Activated CD8-positive, alpha-beta T cell treated with anti-CD3 and anti-CD28 coated beads, Interleukin-2, amount 10 ng/mL, durations not matched to agents 7 days and 5 days (primary cell): ENCODE measurements at regions of chr5 and their contacts with region 1.

Region 1: GRCh38 chr5:76771705-76772405 is 47.0 kb upstream of the F2RL1 start:
- DNase-seq: no peak
- ATAC-seq: no peak
- H3K4me3 Mint-ChIP-seq: no peak overlapping the region
- H3K27ac Mint-ChIP-seq: no peak overlapping the region
- H3K4me1 Mint-ChIP-seq: peaks cover 4% of the 10 kb centered on the region
- H3K27me3 Mint-ChIP-seq: no peaks in the 10 kb centered on the region

Region 2: DNA sequence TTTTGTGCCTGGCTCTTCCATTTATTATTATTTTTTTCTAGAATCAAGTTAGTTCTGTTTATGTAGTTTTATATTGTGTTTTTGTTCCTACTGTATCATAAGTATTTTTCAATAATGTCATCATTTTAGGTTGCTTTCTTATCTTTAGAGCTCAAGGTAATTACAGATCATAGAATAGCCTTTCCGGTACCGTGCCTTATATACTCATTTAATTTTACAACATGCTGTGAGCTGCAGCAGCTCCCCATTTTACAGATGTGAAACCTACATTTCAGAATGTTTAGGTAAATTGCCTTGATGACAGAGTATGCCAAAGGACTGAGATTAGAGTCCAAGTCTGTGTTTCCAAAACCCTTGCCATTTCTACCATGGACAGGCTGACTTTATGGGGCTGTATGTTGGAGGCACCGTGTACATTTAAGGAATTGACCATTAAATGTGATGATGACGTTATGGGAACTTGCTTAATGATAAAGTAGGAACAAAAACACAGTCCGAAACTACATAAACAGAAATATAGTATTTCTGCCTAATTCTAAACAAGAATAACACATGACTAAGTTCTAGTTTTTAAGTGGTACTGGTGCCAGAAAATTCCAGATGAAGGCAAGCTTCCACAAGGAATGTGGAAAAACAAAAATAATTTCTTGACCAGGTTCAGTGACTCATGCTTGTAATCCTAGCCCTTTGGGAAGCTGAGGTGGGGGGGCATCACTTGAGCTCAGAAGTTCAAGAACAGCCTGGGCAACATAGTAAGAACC is 271.0 kb before region 1 on chr5:
- CTCF ChIA-PET with region 1: no interaction called
- POLR2A ChIA-PET with region 1: no interaction called
- DNase-seq: no peak
- ATAC-seq: no peak
- H3K4me3 Mint-ChIP-seq: no peak overlapping the region
- H3K27ac Mint-ChIP-seq: no peak overlapping the region
- H3K4me1 Mint-ChIP-seq: peaks cover 9% of the 10 kb centered on the region
- H3K27me3 Mint-ChIP-seq: no peaks in the 10 kb centered on the region

Region 3: GRCh38 chr5:76582230-76583162 is 189.4 kb before region 1 on chr5:
- CTCF ChIA-PET with region 1: interaction called, 19 read pairs
- POLR2A ChIA-PET with region 1: no interaction called
- DNase-seq: no peak
- ATAC-seq: no peak
- H3K4me3 Mint-ChIP-seq: no peak overlapping the region
- H3K27ac Mint-ChIP-seq: no peak overlapping the region
- H3K4me1 Mint-ChIP-seq: peaks cover 2% of the 10 kb centered on the region
- H3K27me3 Mint-ChIP-seq: no peaks in the 10 kb centered on the region

Region 4: DNA sequence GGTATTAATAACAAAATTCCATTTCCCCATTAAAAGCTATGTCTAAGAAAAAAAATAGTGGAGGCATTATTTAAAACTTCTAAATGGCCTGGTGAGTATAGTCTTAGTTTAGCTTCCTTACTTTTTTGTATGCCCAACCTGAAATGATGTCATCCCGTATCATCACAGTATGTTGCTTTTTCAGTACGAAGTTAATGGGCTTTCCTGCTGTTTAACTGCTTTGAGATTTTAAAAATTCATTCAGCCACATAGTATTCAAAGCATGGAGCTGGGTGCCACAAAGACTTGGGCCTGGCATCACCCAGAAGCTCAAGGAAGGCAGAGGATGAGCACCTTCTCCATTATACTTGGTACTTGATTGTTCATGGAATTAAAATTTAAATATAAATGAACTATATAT is 156.1 kb before region 1 on chr5:
- CTCF ChIA-PET with region 1: interaction called, 12 read pairs
- POLR2A ChIA-PET with region 1: interaction called, 3 read pairs
- DNase-seq: no peak
- ATAC-seq: no peak
- H3K4me3 Mint-ChIP-seq: no peak overlapping the region
- H3K27ac Mint-ChIP-seq: no peak overlapping the region
- H3K4me1 Mint-ChIP-seq: no peaks in the 10 kb centered on the region
- H3K27me3 Mint-ChIP-seq: no peaks in the 10 kb centered on the region

Region 5: DNA sequence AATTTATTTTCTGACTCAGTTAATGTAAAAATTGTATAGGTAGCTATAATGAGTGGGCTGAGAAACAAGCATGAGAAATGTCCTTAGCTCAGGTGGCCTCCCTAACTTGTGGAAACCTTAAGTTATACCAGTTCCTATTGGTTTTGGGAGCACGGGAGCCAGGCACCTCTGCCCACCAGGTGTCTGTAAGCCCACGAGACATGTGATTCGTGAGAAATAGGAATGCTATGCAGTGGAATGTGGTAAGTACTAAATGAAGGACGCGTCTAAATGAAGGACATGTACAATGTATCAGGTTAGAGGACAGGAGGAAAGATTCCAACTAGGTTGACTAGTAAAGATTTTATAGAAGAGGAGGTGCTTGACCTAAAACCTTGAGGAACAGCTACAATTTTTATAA is 102.6 kb before region 1 on chr5:
- CTCF ChIA-PET with region 1: interaction called, 11 read pairs
- POLR2A ChIA-PET with region 1: no interaction called
- DNase-seq: no peak
- ATAC-seq: no peak
- H3K4me3 Mint-ChIP-seq: no peak overlapping the region
- H3K27ac Mint-ChIP-seq: no peak overlapping the region
- H3K4me1 Mint-ChIP-seq: no peaks in the 10 kb centered on the region
- H3K27me3 Mint-ChIP-seq: no peaks in the 10 kb centered on the region

Region 6: DNA sequence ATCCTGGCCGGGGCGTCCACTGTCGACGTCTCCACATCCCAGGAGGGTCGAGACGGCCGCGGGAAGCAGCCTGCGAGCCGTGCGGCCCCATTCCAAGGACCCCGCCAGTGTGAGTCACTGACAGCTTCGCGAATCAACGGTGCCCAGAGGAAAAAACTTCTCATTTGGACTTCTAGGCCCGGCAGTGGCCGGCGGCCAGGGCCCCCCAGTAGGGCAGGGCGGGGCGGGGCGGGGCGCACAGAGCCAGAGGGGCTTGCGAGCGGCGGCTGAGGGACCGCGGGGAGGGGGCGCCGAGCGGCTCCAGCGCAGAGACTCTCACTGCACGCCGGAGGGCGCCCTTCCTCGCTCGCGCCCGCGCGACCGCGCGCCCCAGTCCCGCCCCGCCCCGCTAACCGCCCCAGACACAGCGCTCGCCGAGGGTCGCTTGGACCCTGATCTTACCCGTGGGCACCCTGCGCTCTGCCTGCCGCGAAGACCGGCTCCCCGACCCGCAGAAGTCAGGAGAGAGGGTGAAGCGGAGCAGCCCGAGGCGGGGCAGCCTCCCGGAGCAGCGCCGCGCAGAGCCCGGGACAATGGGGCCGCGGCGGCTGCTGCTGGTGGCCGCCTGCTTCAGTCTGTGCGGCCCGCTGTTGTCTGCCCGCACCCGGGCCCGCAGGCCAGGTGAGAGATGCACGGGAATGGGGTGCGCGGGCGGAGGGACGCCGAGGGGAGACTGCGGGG is 56.0 kb before region 1 on chr5 and contains the start of gene F2R:
- CTCF ChIA-PET with region 1: interaction called, 36 read pairs
- POLR2A ChIA-PET with region 1: no interaction called
- DNase-seq: peak; percentile 67
- ATAC-seq: peak; percentile 78
- H3K4me3 Mint-ChIP-seq: peak within 1 kb of the TSS; percentile 79
- H3K27ac Mint-ChIP-seq: peak within 1 kb of the TSS; percentile 81
- H3K4me1 Mint-ChIP-seq: peaks cover 49% of the 10 kb centered on the region
- H3K27me3 Mint-ChIP-seq: peaks cover 25% of the 10 kb centered on the region
- total RNA-seq, gene F2R: 7.5 to 7.9 TPM

Region 7: GRCh38 chr5:76746677-76747076 is 25.2 kb before region 1 on chr5:
- CTCF ChIA-PET with region 1: interaction called, 78 read pairs
- POLR2A ChIA-PET with region 1: no interaction called
- DNase-seq: no peak
- ATAC-seq: no peak
- H3K4me3 Mint-ChIP-seq: no peak overlapping the region
- H3K27ac Mint-ChIP-seq: no peak overlapping the region
- H3K4me1 Mint-ChIP-seq: no peaks in the 10 kb centered on the region
- H3K27me3 Mint-ChIP-seq: peaks cover 9% of the 10 kb centered on the region

Region 8: GRCh38 chr5:76942581-76942980 is 170.7 kb after region 1 on chr5:
- CTCF ChIA-PET with region 1: no interaction called
- POLR2A ChIA-PET with region 1: no interaction called
- DNase-seq: no peak
- ATAC-seq: no peak
- H3K4me3 Mint-ChIP-seq: no peak overlapping the region
- H3K27ac Mint-ChIP-seq: no peak overlapping the region
- H3K4me1 Mint-ChIP-seq: no peaks in the 10 kb centered on the region
- H3K27me3 Mint-ChIP-seq: peaks cover 33% of the 10 kb centered on the region